Dorsolateral prefrontal cortex (tissue), 120 donors: ENCODE measurements at regions of chr3 and their contacts with region 1.

Region 1: DNA sequence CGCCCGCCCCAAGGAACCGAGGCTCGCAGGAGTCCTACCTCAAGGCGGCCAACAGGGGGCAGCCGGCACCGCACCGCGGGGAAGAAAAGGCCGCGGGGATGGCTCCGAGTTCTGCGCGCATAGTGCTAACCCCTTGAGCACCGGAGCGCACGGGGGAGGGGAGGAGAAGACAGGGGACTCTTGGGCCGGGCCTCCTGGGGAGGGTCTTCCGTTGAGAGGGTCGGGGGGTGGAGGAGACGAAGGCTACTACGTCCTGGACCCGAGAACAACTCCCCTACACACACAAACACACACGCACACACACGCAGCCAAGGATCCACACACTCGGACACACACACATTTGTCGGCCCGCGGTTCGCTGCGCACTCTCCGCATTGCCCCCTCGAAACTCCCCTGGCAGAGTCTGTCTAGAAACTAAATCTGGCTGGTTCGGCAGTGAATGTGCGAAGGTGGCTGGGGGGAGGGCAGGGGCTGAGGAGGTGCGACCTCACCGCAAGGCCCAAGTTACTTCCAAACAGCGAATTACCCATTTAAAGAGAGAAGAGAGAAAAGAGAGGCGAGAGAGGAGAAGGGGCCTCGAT is 1.8 kb downstream of the WNT5A start:
- DNase-seq: peak in 8 of 10 donors; percentile 57 to 82 (median 77)
- H3K4me3 ChIP-seq: peak overlapping the region; percentile 35 to 84 (median 73)
- H3K27ac ChIP-seq: peak overlapping the region in 22 of 59 donors; percentile 4 to 53 (median 38)
- H3K27me3 ChIP-seq: peaks cover 0 to 17% (median 0%) of the 10 kb centered on the region in 45 donors
- CTCF ChIP-seq: peak; percentile 51 to 93 (median 79)

Region 2: DNA sequence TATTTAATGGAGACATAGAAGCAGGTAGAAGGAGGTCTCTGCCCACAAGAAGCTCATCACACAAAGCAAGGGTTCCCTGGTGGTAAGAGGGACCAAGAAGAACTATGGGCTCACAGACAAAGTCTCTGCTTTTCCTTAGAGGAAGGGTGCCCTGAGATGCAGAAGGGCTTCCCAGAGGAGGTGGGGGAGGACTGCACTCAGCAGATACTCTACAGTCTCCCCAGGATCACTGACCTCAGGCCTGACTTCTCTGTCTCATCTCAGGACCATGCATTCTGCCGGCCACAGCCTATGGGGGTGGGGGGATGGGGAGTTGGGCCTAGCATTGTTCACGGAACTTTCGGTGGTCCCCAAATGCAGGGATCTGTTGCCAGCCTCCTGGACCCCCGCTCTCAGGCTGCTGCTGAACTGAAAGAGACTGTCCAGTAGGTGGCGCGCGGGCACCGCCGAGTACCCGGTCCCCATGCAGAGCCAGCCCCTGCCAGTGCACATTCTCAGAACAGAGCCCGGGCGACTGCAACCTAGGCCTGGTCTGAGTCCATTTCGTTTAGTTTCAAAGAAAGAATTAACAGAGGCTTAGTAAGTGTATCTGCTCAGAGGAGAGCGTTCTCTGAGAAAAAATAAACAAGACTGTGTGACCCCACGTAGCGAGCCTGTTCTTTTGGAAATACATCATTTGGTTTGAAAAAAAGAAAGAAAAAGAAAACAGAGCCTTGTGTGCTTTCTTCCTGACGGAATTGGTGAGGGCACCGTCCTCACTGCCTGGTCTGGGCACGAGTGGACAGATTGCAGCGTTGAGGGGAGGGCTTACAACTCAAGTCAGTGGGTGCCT is 631.5 kb before region 1 on chr3:
- intact Hi-C with region 1: loop called in 1 of 2 experiments (anchors 5 kb)
- DNase-seq: peak; percentile 77 to 90 (median 86)
- H3K4me3 ChIP-seq: peak overlapping the region in 5 of 59 donors; percentile 5 to 29 (median 20)
- H3K27ac ChIP-seq: peak overlapping the region in 22 of 59 donors; percentile 5 to 68 (median 43)
- H3K27me3 ChIP-seq: no peaks in the 10 kb centered on the region
- CTCF ChIP-seq: peak; percentile 60 to 98 (median 93)

Region 3: GRCh38 chr3:55500555-55501330 is 15.4 kb after region 1 on chr3:
- intact Hi-C with region 1: no loop called
- DNase-seq: no peak
- H3K4me3 ChIP-seq: no peak overlapping the region
- H3K27ac ChIP-seq: no peak overlapping the region
- H3K27me3 ChIP-seq: no peaks in the 10 kb centered on the region
- CTCF ChIP-seq: no peak

Region 4: GRCh38 chr3:55511895-55512570 is 26.7 kb after region 1 on chr3:
- intact Hi-C with region 1: no loop called
- DNase-seq: no peak
- H3K4me3 ChIP-seq: no peak overlapping the region
- H3K27ac ChIP-seq: no peak overlapping the region
- H3K27me3 ChIP-seq: no peaks in the 10 kb centered on the region
- CTCF ChIP-seq: no peak

Region 5: GRCh38 chr3:55746808-55747413 is 261.6 kb after region 1 on chr3:
- intact Hi-C with region 1: loop called (anchors 2 to 5 kb)
- DNase-seq: no peak
- H3K4me3 ChIP-seq: no peak overlapping the region
- H3K27ac ChIP-seq: no peak overlapping the region
- H3K27me3 ChIP-seq: no peaks in the 10 kb centered on the region
- CTCF ChIP-seq: peak in 55 of 56 donors; percentile 32 to 74 (median 56)

Region 6: DNA sequence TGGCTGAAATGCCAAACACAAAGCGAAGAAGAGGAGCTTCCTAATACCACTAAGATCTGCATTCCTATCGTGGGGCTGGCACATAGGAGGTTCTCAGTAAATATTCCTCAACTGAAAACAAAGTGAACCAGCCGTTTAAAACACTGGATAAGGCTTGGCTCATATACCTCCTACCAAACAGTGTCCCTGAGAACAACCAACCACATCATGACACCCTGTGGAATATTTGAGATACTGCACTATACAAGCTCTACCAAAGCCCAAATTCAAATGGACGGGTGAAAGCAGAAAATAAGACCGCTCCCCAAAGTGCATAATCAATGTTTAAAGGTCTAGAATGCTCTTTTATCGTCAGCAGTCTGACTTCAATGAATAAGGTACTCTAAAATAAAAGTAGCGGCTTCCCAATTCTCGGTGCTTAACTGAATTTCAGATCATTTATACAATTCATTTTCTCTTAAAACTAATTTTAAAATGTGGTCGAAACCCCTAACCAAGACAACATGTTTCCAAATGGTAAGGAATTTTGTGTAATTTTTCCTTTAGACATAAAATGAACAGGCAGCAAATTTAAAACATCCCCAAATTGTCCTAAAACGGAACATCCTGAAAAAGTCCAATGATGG is 557.1 kb after region 1 on chr3:
- intact Hi-C with region 1: loop called (anchors 2 to 5 kb)
- DNase-seq: peak in 1 of 10 donors; percentile 12
- H3K4me3 ChIP-seq: no peak overlapping the region
- H3K27ac ChIP-seq: no peak overlapping the region
- H3K27me3 ChIP-seq: no peaks in the 10 kb centered on the region
- CTCF ChIP-seq: peak; percentile 23 to 79 (median 64)

Region 7: GRCh38 chr3:56251343-56251945 is 766.1 kb after region 1 on chr3:
- intact Hi-C with region 1: loop called (anchors 5 kb)
- DNase-seq: peak in 2 of 10 donors; percentile 39 to 42
- H3K4me3 ChIP-seq: no peak overlapping the region
- H3K27ac ChIP-seq: no peak overlapping the region
- H3K27me3 ChIP-seq: no peaks in the 10 kb centered on the region
- CTCF ChIP-seq: peak; percentile 65 to 94 (median 85)